ENCODE measurements at regions of chr14 and their contacts with region 1.

Region 1: GRCh38 chr14:50109342-50109741 is 7.0 kb downstream of the VCPKMT start:
- DNase-seq: no peak
- ATAC-seq: no peak

Region 2: GRCh38 chr14:49862089-49862673 is 247.2 kb before region 1 on chr14:
- intact Hi-C with region 1: loop called (anchors 5 kb)
- DNase-seq: peak; percentile 83
- ATAC-seq: peak; percentile 62

Region 3: GRCh38 chr14:49930720-49931119 is 178.6 kb before region 1 on chr14:
- intact Hi-C with region 1: no loop called
- DNase-seq: no peak
- ATAC-seq: no peak

Region 4: GRCh38 chr14:50003213-50004031 is 105.9 kb before region 1 on chr14:
- intact Hi-C with region 1: loop called (anchors 10 kb)
- DNase-seq: peak; percentile 92
- ATAC-seq: peak; percentile 74

Region 5: DNA sequence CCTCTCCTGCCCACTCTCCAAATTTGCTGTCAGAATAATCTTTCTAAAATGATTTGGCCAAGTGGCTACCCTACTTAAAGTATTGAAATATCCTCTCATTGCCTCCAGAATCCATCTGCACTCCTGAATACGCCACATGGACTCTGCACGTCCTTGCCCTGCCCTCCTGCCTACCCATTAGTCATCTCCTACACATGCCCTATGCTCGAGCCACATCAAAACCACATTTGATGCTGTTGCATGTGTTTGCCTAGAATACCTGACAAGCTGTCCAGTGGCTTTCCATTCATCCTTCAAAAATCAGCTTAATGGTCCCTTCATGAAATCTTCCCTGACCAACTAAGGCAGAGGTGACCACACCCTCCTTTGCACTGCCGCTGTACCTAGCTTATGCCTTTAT is 10.0 kb before region 1 on chr14:
- intact Hi-C with region 1: no loop called
- DNase-seq: no peak
- ATAC-seq: no peak

Region 6: DNA sequence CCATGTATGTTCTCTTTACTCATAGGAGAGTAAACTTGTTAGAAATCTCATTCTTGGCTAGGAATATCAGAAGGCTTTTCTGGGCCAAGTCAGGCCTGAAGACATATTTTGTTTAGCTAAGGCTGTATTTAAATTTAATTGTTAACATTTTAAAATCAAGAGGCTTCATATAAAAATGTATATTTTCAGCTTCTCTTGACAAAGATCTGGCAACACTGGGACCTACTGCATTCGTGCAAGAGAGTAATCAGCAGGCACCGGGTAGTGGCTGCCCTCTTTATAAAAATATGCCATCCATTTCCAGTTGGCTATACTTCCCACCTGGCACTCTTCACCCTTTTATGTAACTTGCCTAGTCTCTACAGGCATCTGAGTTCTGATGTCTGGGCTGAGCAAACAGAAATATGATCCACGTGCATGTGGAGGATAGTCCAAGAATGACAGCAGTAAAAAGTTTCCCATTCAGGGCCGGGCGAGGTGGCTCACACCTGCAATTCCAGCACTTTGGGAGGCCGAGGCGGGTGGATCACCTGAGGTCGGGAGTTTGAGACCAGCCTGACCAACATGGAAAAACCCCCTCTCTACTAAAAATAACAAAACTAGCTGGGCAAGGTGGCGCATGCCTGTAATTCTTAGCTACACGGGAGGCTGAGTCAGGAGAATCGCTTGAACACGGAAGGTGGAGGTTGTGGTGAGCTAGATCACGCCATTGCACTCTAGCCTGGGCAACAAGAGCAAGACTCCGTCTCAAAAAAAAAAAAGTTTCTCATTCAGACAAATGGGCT is 124.0 kb after region 1 on chr14:
- intact Hi-C with region 1: no loop called
- DNase-seq: no peak
- ATAC-seq: peak; percentile 38

Measured in left ventricle myocardium superior (tissue), 1 donor.